MCF 10A (cell line): ENCODE measurements at regions of chr15 and their contacts with region 1.

Region 1: DNA sequence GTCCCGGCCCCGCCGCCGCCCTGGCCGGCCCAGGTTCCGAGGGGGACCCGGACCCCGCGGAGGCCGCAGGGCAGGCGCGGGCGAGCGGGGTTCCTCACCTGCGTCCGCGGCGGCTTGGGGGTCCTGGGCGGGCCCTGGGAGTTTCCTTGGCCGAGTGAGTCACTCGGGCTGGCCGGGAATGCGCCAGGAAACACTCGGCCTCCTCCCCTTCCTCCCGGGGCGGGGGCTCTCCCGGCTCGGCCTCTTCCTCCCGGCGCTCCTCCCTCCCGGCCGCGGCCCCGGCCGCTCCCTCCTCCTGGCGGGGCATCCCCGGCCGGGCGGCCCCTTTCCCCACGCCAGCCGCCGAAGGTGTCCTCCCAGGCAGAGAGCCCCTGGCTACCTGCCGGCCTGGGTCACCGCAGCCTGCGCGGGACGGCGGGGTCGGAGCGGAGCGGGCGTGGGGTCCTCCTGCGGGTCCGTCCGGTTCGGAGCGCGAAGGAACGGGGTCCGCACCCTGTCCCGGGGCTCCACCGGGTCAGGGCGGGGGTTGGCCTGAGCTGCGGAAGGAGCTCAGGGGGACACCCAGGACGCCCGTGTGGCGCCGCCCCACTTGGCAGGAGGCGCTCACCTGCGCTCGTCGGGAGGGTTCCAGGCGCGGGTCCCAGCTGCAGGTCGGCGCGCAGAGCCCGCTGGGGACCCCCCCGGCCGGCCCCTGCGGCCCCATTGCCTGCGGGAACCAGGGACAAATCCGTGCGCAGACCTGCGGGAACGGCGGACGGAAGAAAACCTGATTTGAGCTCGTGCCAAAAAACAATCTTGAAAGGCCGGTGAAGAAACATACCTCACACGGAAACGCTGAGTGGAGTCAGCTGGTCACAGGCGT is at the start of gene CYFIP1:
- DNase-seq: peak; percentile 89
- H3K4me3 Mint-ChIP-seq: peak within 1 kb of the TSS; percentile 95
- H3K27ac Mint-ChIP-seq: peak within 1 kb of the TSS; percentile 86
- H3K4me1 Mint-ChIP-seq: no peaks in the 10 kb centered on the region
- H3K27me3 Mint-ChIP-seq: no peaks in the 10 kb centered on the region
- CTCF ChIP-seq: no peak
- total RNA-seq, gene CYFIP1: 85.7 and 99.1 TPM in 2 replicates

Region 2: DNA sequence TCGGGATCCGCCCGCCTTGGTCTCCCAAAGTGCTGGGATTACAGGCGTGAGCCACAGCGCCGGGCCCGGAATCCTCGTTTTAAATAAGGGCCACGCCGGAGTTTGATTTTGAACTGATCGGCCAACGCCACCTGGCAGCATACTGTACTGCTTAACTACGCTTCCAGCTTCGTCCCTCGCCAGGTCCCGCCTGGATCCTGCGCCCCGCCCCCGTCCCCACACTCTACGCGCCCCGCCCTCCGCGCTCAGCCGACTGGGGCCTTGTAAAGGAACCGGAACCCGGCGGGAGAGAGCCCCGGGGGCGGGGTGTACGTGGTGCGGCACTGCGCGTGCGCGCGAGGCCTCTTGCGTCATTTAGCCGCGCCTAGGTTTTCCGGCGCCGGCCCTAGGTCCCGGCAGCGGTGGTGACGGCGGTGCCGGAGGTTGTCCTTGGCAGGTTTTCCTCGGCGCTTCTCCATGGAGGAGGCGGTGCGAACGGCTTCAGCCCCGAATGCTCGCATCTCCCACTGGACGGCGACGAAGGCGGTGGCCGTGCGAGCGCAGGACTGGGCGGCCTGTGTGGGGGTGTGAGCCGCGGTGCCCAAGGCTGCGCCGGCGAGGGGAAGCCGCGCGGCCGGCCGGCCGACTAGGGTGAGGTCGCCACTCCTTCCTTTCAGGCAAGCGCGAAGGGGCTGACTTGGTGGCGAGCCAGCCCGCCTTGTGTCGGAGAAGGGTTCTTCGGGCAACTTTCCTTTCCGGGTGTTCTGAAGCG is 142.0 kb before region 1 on chr15 and contains the start of gene NIPA2:
- CTCF ChIA-PET with region 1: no interaction called
- POLR2A ChIA-PET with region 1: interaction called, 11 read pairs
- intact Hi-C with region 1: no loop called
- DNase-seq: peak; percentile 98
- H3K4me3 Mint-ChIP-seq: peak within 1 kb of the TSS; percentile 81
- H3K27ac Mint-ChIP-seq: peak within 1 kb of the TSS; percentile 96
- H3K4me1 Mint-ChIP-seq: peaks cover 18% of the 10 kb centered on the region
- H3K27me3 Mint-ChIP-seq: no peaks in the 10 kb centered on the region
- CTCF ChIP-seq: no peak
- total RNA-seq, gene NIPA2: 50.4 and 51.9 TPM in 2 replicates

Region 3: DNA sequence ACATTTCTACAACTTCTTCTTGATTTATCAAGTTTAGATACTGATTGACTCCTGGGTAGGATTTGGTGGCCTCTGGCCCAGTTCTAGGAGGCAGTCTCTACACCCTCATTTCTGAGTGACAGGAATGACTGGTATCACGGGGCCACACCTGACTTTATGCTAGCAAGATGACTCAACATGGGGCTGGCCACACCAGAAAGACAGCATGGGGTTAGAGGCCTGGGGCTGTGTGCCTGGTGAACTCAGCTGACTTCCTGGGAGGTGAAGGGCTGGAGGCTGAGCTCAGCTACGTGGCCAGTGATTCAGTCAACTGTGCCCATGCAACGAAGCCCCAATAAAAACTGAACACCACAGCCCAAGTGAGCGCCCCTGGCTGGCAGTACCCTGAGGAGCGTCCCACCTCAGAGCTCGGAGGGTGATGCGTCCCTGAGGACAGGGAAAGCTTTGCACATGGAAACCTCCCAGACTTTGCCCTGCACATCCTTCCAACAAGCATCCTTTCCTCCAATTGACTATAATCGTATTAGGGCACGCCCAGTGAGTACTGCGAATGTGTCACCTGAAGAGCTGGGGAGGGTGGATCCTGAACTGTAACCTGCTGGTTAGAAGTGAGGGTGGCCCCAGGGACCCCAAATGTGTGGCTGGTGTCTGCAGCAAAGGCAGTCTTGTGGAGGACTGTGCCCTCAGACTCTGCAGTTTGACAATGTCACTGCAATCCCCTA is 84.8 kb before region 1 on chr15:
- CTCF ChIA-PET with region 1: no interaction called
- POLR2A ChIA-PET with region 1: interaction called, 4 read pairs
- intact Hi-C with region 1: loop called (anchors 5 kb)
- DNase-seq: peak; percentile 95
- H3K4me3 Mint-ChIP-seq: peak overlapping the region; percentile 22
- H3K27ac Mint-ChIP-seq: peak overlapping the region; percentile 85
- H3K4me1 Mint-ChIP-seq: peaks cover 16% of the 10 kb centered on the region
- H3K27me3 Mint-ChIP-seq: no peaks in the 10 kb centered on the region
- CTCF ChIP-seq: no peak

Region 4: GRCh38 chr15:22915866-22916515 is 64.4 kb before region 1 on chr15:
- CTCF ChIA-PET with region 1: no interaction called
- POLR2A ChIA-PET with region 1: no interaction called
- intact Hi-C with region 1: no loop called
- DNase-seq: no peak
- H3K4me3 Mint-ChIP-seq: no peak overlapping the region
- H3K27ac Mint-ChIP-seq: no peak overlapping the region
- H3K4me1 Mint-ChIP-seq: no peaks in the 10 kb centered on the region
- H3K27me3 Mint-ChIP-seq: no peaks in the 10 kb centered on the region
- CTCF ChIP-seq: no peak

Region 5: GRCh38 chr15:22930782-22931484 is 49.5 kb before region 1 on chr15:
- CTCF ChIA-PET with region 1: interaction called, 4 read pairs
- POLR2A ChIA-PET with region 1: interaction called, 4 read pairs
- intact Hi-C with region 1: loop called (anchors 5 kb)
- DNase-seq: peak; percentile 65
- H3K4me3 Mint-ChIP-seq: no peak overlapping the region
- H3K27ac Mint-ChIP-seq: no peak overlapping the region
- H3K4me1 Mint-ChIP-seq: peaks cover 11% of the 10 kb centered on the region
- H3K27me3 Mint-ChIP-seq: no peaks in the 10 kb centered on the region
- CTCF ChIP-seq: no peak

Region 6: DNA sequence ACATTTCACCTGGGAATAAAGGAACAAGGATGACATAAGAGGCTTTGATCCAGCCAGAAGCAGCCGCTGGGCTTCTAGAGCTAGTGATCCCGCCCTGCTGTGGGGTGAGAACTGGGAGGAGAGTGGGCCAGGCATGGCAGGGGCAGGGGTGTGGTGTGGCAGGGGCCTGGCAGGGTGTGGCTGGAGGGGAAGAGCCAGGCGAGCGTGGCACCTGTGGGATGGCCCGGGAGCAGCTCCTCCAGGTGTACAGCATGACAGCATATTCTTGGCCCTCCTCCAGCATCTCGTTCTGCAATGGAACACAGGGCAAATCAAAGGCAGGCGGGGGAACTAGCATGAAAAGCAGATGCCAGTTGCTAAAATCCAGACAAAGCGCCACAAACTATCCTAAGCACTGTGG is 35.8 kb before region 1 on chr15:
- CTCF ChIA-PET with region 1: interaction called, 3 read pairs
- POLR2A ChIA-PET with region 1: interaction called, 13 read pairs
- intact Hi-C with region 1: no loop called
- DNase-seq: peak; percentile 49
- H3K4me3 Mint-ChIP-seq: no peak overlapping the region
- H3K27ac Mint-ChIP-seq: peak overlapping the region; percentile 27
- H3K4me1 Mint-ChIP-seq: peaks cover 21% of the 10 kb centered on the region
- H3K27me3 Mint-ChIP-seq: no peaks in the 10 kb centered on the region
- CTCF ChIP-seq: no peak

Region 7: DNA sequence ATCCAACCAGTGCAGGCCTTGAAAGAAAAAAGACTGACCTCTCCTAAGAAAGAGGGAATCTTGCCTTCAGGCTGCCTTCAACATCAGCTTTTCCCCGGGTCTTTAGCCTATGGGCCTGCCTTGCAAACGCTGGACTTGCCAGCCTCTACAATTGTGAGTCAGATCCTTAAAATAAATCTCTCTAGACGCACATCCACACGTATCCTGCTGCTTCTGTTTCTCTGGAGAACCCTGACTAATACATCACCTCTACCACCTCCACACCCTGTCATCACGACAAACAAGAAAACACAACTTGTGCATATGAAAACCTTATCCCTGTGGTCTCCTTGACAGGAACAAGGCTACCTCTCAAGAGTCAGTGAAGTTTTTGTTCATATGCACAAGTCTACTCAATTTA is 12.1 kb before region 1 on chr15:
- CTCF ChIA-PET with region 1: interaction called, 3 read pairs
- POLR2A ChIA-PET with region 1: interaction called, 29 read pairs
- intact Hi-C with region 1: no loop called
- DNase-seq: peak; percentile 71
- H3K4me3 Mint-ChIP-seq: no peak overlapping the region
- H3K27ac Mint-ChIP-seq: peak overlapping the region; percentile 39
- H3K4me1 Mint-ChIP-seq: peaks cover 20% of the 10 kb centered on the region
- H3K27me3 Mint-ChIP-seq: no peaks in the 10 kb centered on the region
- CTCF ChIP-seq: no peak

Region 8: DNA sequence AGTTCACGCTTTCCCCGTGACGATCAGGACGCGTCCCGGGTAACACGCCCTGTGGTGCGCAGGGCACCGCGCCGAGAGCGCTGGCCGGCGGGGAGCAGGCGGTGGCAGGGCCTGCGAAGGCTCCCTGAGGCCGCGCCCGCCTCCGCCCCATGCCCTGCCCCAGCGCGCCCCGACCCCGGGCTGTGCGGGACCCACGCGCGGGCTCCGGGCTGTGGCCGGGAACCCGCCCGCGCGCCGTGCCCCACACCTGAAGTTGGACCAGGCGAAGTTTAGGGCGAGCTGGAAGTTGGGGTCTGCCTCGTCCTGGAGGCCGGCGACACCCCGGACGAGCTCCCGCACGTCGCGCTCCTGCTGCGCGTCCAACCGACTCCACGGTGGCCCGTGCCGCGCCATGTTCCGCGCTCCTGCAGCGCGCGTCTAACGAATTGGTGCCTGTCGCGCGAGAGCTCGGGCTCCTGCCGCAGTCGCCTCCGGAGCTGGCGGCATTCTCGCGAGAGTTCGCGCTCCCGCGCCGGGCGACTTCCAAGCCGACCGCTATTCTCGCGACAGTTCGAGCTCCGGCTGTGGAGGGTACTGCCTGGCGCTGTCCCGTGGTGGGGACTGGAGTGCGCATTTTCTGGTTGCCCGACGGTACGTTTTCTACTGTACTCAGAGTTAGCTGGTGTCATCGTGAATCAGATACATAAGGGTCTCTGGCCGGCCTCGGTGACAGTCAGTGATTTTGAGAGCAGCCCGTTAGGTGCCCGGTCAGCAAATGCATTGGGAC is 58.9 kb after region 1 on chr15 and contains the start of gene TUBGCP5:
- CTCF ChIA-PET with region 1: interaction called, 3 read pairs
- POLR2A ChIA-PET with region 1: interaction called, 16 read pairs
- intact Hi-C with region 1: no loop called
- DNase-seq: peak; percentile 95
- H3K4me3 Mint-ChIP-seq: peak within 1 kb of the TSS; percentile 77
- H3K27ac Mint-ChIP-seq: peak within 1 kb of the TSS; percentile 78
- H3K4me1 Mint-ChIP-seq: peaks cover 6% of the 10 kb centered on the region
- H3K27me3 Mint-ChIP-seq: no peaks in the 10 kb centered on the region
- CTCF ChIP-seq: no peak
- total RNA-seq, gene TUBGCP5: 15.7 and 18.2 TPM in 2 replicates